Sciatic nerve (tissue), 2 donors: ENCODE measurements at regions of chr12 and their contacts with region 1.

Region 1: DNA sequence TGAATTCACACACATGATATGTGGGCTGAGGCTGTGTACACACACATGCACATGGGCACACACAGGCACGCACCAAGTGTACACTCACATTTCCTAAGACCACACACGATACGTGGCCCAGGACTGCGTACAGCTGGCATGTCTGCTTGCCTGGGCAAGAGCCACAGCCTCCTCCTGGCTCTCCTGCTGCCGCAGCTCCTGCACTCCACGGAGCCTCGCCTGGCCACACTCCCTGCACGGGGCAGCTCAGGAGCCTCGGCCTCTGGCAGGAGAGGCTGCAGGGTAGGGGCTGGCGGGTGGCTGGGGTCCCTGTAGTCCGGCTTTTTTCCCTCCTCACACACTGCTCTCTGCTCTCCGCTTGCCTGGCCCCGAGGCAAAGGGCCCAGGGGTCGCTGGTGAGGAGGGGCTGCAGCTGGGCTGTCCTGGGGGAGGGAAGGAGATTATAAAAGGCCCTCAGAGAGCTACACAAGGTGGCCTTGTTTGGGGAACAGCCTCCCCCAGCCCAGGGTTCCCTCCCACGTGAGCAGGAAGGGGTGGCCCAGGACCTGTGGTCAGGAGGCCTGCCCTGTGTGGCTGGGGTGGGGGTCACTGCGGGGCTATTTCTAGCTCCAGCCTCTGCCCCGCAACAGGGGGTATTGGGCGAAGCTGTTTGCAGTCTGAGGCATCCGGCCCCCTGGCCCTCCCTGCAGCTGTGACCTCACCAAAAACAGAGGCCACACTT is 89.0 kb upstream of the SFSWAP start:
- DNase-seq: peak; percentile 79
- ATAC-seq: peak; percentile 83

Region 2: DNA sequence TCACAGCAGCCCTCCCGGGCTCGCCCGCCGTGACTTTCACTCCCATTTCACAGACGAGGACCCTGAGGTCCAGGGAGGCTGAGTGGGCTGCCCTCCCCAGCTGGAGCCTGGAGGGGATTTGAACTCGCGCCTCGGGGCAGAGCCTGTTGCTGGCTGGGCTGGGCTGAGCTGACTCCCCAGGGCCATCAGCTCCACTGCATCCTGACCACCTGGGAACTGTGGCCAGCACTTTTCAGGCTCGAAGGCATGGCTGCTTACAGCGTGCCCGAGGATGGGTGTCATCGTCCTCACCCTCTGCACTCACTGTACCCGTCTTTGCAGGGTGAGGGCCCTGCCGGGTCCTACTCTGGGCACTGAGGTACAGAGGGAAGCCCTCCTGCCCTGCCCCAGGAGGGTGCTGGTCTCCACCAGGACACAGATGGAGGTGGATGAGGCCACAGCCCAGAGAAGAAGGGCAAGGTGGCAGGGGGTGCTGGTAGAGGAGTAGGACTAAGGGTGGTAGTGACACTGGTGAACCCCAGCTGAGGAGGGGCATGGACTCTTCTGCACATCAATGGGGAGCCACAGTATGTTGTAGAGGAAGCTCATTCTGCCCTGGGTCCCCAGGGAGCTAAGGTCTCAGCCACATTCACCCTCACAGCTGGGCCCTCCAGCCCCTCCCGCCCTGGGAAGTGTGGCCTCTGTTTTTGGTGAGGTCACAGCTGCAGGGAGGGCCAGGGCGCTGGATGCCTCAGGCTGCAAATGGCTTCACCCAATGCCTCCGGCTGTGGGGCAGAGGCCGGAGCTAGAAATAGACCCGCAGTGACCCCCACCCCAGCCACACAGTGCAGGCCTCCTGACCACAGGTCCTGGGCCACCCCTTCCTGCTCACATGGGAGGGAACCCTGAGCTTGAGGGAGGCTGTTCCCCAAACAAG is 276.1 kb before region 1 on chr12:
- intact Hi-C with region 1: loop called (anchors 5 kb)
- DNase-seq: no peak
- ATAC-seq: peak; percentile 71